ENCODE measurements at regions of chr3 and their contacts with region 1.

Region 1: DNA sequence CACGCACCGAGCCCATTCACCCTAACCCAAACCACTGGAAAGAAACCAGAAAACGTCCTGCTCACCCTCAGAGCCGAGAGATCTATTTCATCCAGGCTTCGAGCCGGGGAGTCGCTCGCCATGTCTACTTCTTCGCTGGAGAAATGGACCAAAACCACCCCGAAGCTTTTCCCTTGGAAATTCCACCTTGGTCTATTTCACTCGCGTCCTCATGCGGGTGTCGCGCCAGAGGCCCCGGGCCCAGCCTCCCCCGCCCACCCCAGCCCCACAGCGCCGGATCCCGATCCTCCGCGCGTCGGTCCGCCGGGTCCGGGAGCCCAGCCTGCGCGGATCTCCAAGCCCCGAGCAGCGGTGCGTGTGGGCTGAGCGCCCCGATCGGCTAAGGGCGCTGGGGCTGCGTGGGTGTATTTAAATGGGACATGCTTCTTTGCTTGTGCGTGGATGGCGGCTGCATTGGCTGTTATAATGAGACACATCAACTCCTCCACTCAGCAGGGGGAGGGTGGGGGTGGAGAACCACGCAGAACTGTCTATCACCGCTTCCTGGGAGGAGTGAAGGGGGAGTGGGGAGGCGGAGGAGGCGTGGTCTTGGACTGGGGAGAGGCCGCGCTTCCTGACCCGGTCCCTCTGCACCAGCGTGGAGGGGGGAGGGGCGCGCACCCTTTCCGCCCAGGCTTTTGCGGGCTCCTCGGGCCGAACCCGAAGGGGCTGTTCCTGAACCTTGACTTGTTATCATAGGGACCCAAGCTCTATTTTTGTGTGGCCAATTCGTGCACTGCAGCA is at the start of gene TNIK:
- DNase-seq: peak; percentile 86 to 98 (median 92)
- ATAC-seq: peak; percentile 85
- H3K4me3 ChIP-seq: peak within 1 kb of the TSS; percentile 84 to 96
- H3K4me3 Mint-ChIP-seq: peak within 1 kb of the TSS; percentile 96
- H3K27ac ChIP-seq: peak within 1 kb of the TSS; percentile 53 to 70
- H3K27ac Mint-ChIP-seq: peak within 1 kb of the TSS; percentile 96
- H3K4me1 ChIP-seq: peaks cover 40% of the 10 kb centered on the region
- H3K4me1 Mint-ChIP-seq: peaks cover 48% of the 10 kb centered on the region
- H3K27me3 ChIP-seq: no peaks in the 10 kb centered on the region
- H3K27me3 Mint-ChIP-seq: no peaks in the 10 kb centered on the region
- CTCF ChIP-seq: peak; percentile 57
- total RNA-seq, gene TNIK: 60.8 to 65.1 TPM

Region 2: DNA sequence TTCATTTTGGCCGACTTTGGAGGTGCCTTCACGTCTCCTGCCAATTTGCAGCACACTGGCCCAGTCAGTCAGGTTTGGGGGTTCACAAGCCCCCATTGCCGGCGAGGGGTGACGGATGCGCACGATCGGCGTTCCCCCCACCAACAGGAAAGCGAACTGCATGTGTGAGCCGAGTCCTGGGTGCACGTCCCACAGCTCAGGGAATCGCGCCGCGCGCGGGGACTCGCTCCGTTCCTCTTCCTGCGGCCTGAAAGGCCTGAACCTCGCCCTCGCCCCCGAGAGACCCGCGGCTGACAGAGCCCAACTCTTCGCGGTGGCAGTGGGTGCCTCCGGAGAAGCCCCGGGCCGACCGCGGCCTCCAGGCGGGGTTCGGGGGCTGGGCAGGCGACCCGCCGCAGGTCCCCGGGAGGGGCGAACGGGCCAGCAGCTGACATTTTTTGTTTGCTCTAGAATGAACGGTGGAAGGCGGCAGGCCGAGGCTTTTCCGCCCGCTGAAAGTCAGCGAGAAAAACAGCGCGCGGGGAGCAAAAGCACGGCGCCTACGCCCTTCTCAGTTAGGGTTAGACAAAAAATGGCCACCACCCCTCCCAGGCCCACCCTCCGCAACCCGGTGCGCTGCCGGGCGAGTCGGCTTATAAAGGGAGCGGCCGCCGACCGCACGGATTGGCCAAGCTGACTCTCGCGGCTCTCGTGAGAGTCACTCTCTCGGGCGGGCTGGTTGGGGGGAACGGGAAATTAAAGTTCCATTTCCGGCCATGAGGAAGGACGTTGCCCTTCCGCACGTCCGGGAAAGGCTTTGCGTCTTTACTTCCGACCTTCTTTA is 1695.5 kb before region 1 on chr3 and contains the start of gene TERC:
- CTCF ChIA-PET with region 1: no interaction called
- POLR2A ChIA-PET with region 1: no interaction called
- intact Hi-C with region 1: loop called in 1 of 2 experiments (anchors 5 kb)
- DNase-seq: peak; percentile 84 to 98 (median 93)
- ATAC-seq: peak; percentile 84
- H3K4me3 ChIP-seq: peak within 1 kb of the TSS; percentile 79 to 81
- H3K4me3 Mint-ChIP-seq: peak within 1 kb of the TSS; percentile 96
- H3K27ac ChIP-seq: peak within 1 kb of the TSS; percentile 91 to 93
- H3K27ac Mint-ChIP-seq: peak within 1 kb of the TSS; percentile 98
- H3K4me1 ChIP-seq: peaks cover 14% of the 10 kb centered on the region
- H3K4me1 Mint-ChIP-seq: peaks cover 25% of the 10 kb centered on the region
- H3K27me3 ChIP-seq: no peaks in the 10 kb centered on the region
- H3K27me3 Mint-ChIP-seq: no peaks in the 10 kb centered on the region
- CTCF ChIP-seq: no peak
- total RNA-seq, gene TERC: 12.7 to 13.3 TPM

Region 3: DNA sequence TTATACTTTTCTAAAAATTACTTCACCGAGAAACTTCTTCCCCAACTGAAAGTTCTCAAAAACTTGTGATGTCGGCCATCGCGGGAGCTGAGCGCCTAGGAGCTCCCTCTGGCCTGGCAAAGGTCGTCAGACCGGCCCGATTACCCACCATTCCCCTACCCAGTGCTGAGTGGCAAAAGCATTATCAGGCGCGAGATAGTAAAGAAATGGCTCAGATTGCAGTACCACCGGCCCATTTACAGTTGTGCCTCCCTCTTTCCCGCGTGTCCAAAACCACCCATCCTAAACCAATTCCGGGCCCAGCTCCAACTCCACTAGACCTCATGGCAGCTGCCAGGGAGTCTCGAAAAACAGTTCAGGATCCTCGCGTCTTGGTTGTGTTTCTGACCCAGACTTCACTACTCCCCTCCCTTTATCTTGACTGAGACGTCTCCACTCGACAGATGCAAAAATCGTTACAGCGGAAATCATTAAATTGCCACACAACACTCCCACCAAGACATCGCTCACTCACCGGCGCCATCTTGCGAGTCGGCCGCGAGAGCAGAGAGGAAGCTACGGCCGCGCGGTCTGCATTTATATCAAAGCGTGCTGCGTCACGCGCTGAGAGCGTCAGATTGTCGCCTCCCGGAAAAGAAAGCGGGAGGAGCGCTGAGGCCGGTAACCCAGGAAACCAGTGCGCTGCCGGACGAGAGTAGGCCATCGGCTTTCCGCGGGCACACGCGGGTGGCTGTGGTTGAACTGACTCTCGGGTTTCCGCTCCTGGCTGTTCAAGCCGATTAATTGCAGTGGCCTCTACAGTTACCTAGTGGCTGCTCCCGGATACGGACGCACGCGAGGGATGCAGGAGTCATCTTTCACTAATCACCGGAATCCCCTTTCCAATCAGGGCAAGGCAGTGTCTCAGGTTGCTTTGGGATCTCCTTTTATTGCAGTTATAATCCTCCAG is 590.2 kb before region 1 on chr3 and contains the start of gene RPL22L1:
- CTCF ChIA-PET with region 1: no interaction called
- POLR2A ChIA-PET with region 1: no interaction called
- intact Hi-C with region 1: loop called in 1 of 2 experiments (anchors 5 kb)
- DNase-seq: peak; percentile 85 to 97 (median 93)
- ATAC-seq: peak; percentile 93
- H3K4me3 ChIP-seq: peak within 1 kb of the TSS; percentile 73 to 77
- H3K4me3 Mint-ChIP-seq: peak within 1 kb of the TSS; percentile 94
- H3K27ac ChIP-seq: peak within 1 kb of the TSS; percentile 84 to 94
- H3K27ac Mint-ChIP-seq: peak within 1 kb of the TSS; percentile 97
- H3K4me1 ChIP-seq: peaks cover 27% of the 10 kb centered on the region
- H3K4me1 Mint-ChIP-seq: peaks cover 28% of the 10 kb centered on the region
- H3K27me3 ChIP-seq: no peaks in the 10 kb centered on the region
- H3K27me3 Mint-ChIP-seq: no peaks in the 10 kb centered on the region
- CTCF ChIP-seq: no peak
- total RNA-seq, gene RPL22L1: 54.3 to 56.8 TPM

Region 4: GRCh38 chr3:171187706-171188290 is 272.3 kb before region 1 on chr3:
- CTCF ChIA-PET with region 1: interaction called, 8 read pairs
- POLR2A ChIA-PET with region 1: interaction called, 3 read pairs
- intact Hi-C with region 1: loop called in 1 of 2 experiments (anchors 1 kb)
- DNase-seq: peak in 3 of 9 experiments; percentile 10 to 55 (median 40)
- ATAC-seq: peak; percentile 63
- H3K4me3 ChIP-seq: no peak overlapping the region
- H3K4me3 Mint-ChIP-seq: no peak overlapping the region
- H3K27ac ChIP-seq: no peak overlapping the region
- H3K27ac Mint-ChIP-seq: no peak overlapping the region
- H3K4me1 ChIP-seq: no peaks in the 10 kb centered on the region
- H3K4me1 Mint-ChIP-seq: peaks cover 13% of the 10 kb centered on the region
- H3K27me3 ChIP-seq: no peaks in the 10 kb centered on the region
- H3K27me3 Mint-ChIP-seq: no peaks in the 10 kb centered on the region
- CTCF ChIP-seq: peak; percentile 75

Region 5: DNA sequence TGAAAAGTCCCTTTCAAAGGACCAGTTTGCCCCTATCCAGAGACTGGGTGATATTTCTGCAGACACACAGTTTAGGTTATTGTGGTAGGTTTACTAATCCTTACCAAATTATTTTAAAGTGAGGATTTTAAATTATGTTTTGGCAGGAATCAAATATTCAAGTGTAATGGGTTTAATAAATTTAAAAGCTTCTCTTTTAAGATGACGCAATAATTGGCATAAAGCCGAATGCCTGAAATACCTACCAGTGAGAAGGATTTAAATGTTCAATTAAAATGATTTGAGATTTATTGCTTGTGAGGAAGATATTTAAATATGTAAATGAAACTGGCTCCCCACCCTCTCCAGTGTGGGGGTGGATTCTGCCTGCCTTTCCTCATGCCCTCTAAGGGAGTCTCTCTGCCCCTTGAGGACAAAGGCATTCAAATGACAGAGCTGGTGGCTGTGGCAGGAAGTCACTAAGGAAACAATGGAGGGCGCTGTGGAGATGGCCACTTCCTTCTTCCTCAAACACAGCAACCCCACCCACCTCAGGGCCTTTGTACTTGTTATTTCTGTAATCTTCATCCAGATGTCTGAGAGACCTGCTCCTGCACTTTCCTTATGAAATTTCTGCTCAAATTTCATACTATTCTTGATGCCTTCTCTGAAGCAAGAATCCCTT is 131.6 kb before region 1 on chr3:
- CTCF ChIA-PET with region 1: interaction called, 5 read pairs
- POLR2A ChIA-PET with region 1: interaction called, 3 read pairs
- intact Hi-C with region 1: loop called in 1 of 2 experiments (anchors 2 kb)
- DNase-seq: peak; percentile 22 to 81 (median 54)
- ATAC-seq: peak; percentile 97
- H3K4me3 ChIP-seq: no peak overlapping the region
- H3K4me3 Mint-ChIP-seq: no peak overlapping the region
- H3K27ac ChIP-seq: no peak overlapping the region
- H3K27ac Mint-ChIP-seq: peak overlapping the region; percentile 1
- H3K4me1 ChIP-seq: peaks cover 31% of the 10 kb centered on the region
- H3K4me1 Mint-ChIP-seq: peaks cover 65% of the 10 kb centered on the region
- H3K27me3 ChIP-seq: no peaks in the 10 kb centered on the region
- H3K27me3 Mint-ChIP-seq: no peaks in the 10 kb centered on the region
- CTCF ChIP-seq: peak; percentile 38

Region 6: DNA sequence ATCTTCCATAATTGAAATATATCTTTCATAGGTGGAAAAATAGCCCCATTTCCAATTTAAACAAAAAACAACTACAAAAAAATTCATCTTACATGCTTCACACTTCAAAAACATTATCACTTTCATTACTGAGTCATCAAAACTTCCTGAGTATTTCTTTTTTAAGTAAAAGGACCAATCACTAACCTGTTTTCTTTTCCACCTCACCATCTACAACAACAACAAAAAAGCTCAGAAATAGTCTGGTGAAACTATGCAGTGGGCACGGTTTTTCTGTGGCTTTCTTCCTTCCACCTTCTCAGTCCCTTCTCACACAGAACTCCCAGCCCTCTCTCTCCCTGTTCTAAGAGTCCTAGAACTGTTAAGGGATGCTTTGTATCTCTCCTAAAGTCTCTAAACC is 20.4 kb after region 1 on chr3:
- CTCF ChIA-PET with region 1: interaction called, 7 read pairs
- POLR2A ChIA-PET with region 1: interaction called, 9 read pairs
- intact Hi-C with region 1: loop called (anchors 1 to 2 kb)
- DNase-seq: peak in 2 of 9 experiments; percentile 42 to 64
- ATAC-seq: peak; percentile 79
- H3K4me3 ChIP-seq: no peak overlapping the region
- H3K4me3 Mint-ChIP-seq: peak overlapping the region; percentile 30
- H3K27ac ChIP-seq: peak overlapping the region in 1 of 2 experiments; percentile 50
- H3K27ac Mint-ChIP-seq: peak overlapping the region; percentile 69
- H3K4me1 ChIP-seq: peaks cover 15% of the 10 kb centered on the region
- H3K4me1 Mint-ChIP-seq: peaks cover 10% of the 10 kb centered on the region
- H3K27me3 ChIP-seq: no peaks in the 10 kb centered on the region
- H3K27me3 Mint-ChIP-seq: no peaks in the 10 kb centered on the region
- CTCF ChIP-seq: no peak

Region 7: GRCh38 chr3:171566803-171567422 is 106.8 kb after region 1 on chr3:
- CTCF ChIA-PET with region 1: interaction called, 10 read pairs
- POLR2A ChIA-PET with region 1: interaction called, 3 read pairs
- intact Hi-C with region 1: loop called in 1 of 2 experiments (anchors 2 kb)
- DNase-seq: peak in 2 of 9 experiments; percentile 66 to 74
- ATAC-seq: peak; percentile 57
- H3K4me3 ChIP-seq: no peak overlapping the region
- H3K4me3 Mint-ChIP-seq: no peak overlapping the region
- H3K27ac ChIP-seq: no peak overlapping the region
- H3K27ac Mint-ChIP-seq: no peak overlapping the region
- H3K4me1 ChIP-seq: no peaks in the 10 kb centered on the region
- H3K4me1 Mint-ChIP-seq: peaks cover 3% of the 10 kb centered on the region
- H3K27me3 ChIP-seq: no peaks in the 10 kb centered on the region
- H3K27me3 Mint-ChIP-seq: peaks cover 2% of the 10 kb centered on the region
- CTCF ChIP-seq: peak; percentile 94